GM10248 (cell line): ENCODE measurements at regions of chr14 and their contacts with region 1.

Region 1: GRCh38 chr14:34331728-34332623 is 130.1 kb downstream of the SPTSSA start:
- DNase-seq: peak; percentile 52
- CTCF ChIP-seq: peak; percentile 81

Region 2: GRCh38 chr14:34345718-34346465 is 13.9 kb after region 1 on chr14:
- CTCF ChIA-PET with region 1: interaction called, 17 read pairs
- POLR2A ChIA-PET with region 1: interaction called, 3 read pairs
- DNase-seq: no peak
- CTCF ChIP-seq: no peak

Region 3: GRCh38 chr14:34355584-34356263 is 23.7 kb after region 1 on chr14:
- CTCF ChIA-PET with region 1: interaction called, 19 read pairs
- POLR2A ChIA-PET with region 1: no interaction called
- DNase-seq: no peak
- CTCF ChIP-seq: no peak

Region 4: DNA sequence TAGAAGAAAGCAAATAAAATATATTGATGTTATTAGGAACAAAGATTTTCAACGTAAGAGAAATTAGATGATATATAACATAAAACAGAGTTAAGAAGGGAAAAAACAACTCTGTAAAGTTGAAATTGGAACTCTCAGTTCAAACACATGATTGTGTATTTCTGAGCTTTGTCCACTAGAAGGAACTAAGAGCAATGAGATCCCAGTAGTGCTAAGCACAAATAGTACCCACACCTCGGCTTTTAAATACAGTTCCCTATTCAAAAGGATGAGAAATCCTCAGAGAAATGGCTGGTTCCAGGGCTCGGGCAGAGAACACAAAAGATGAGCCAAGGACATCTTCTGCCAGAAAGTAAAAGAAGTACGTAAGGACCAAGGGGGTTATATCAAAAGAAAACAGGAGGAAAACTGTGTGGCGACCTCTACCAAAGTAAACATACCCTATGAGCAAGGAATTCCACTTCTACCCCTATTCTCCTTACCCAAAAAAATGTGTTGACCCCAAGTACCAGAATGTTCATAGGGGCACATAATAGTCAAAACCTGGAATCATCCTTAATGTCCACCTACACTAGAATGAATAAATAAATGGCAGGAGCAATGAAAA is 33.4 kb after region 1 on chr14:
- CTCF ChIA-PET with region 1: interaction called, 11 read pairs
- POLR2A ChIA-PET with region 1: no interaction called
- DNase-seq: no peak
- CTCF ChIP-seq: peak; percentile 8

Region 5: DNA sequence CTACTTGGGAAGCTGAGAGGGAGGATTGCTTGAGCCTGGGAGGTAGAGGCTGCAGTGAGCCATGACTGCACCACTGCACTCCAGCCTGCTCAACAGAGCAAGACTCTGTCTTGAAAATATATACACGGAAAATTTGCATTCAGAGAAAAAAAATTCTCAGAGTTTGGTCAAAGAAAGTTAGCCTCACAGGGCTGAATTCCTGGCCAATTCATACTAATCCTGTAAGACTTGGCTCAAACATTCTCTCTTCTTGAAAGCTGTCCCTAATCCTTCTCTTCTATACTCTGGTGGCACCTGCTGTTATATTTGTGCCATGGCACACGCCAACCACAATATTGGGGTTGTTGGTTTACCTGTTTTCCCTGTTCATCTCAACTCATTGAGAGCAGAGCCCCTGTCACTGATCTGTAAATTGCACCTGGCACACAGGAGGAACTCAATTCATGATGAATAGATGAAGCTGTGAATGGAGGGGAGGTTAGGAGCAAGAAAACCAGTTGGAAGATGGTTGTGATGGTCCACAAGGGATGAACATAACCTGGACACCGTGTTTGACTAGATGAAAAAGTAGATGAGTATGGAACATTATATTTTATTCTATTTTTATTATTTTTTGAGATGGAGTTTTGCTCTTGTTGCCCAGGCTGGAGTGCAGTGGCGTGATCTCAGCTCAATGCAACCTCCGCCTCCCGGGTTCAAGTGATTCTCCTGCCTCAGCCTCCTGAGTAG is 166.9 kb after region 1 on chr14:
- CTCF ChIA-PET with region 1: interaction called, 16 read pairs
- POLR2A ChIA-PET with region 1: no interaction called
- DNase-seq: peak; percentile 26
- CTCF ChIP-seq: peak; percentile 40